GM13977 (cell line): ENCODE measurements at regions of chr3 and their contacts with region 1.

Region 1: DNA sequence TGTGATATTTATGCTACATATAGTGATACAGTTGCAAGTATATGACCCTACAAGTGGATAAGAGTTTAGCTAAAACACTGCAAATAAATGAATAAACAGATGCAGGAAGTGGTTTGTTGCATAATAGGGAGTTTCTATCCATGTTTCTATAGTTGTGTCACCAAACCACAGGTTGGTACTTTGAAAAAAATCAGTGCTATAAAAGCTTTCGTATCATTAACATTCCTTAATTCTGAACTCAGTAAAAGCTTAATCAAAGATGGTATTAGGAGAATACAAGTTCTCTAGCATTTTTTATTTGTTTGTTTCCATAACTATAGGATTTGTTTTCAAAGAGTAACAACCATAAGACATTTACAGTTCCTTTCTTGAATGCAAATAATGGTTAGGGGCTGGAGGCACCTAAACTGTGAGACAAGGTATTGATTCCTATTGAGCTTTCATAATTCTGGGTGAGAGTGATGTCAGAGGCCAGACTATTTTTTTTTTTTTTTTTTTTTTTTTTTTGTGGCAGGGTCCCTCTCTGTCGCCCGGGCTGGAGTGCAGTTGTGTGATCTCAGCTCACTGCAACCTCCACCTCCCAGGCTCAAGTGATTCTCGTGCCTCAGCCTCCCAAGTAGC is 29.6 kb downstream of the CPOX start:
- DNase-seq: no peak
- CTCF ChIP-seq: no peak

Region 2: GRCh38 chr3:98525494-98525893 is 38.3 kb before region 1 on chr3:
- in situ Hi-C with region 1: loop called (anchors 5 kb)
- DNase-seq: no peak
- CTCF ChIP-seq: no peak